ENCODE measurements at regions of chr11 and their contacts with region 1.

Region 1: DNA sequence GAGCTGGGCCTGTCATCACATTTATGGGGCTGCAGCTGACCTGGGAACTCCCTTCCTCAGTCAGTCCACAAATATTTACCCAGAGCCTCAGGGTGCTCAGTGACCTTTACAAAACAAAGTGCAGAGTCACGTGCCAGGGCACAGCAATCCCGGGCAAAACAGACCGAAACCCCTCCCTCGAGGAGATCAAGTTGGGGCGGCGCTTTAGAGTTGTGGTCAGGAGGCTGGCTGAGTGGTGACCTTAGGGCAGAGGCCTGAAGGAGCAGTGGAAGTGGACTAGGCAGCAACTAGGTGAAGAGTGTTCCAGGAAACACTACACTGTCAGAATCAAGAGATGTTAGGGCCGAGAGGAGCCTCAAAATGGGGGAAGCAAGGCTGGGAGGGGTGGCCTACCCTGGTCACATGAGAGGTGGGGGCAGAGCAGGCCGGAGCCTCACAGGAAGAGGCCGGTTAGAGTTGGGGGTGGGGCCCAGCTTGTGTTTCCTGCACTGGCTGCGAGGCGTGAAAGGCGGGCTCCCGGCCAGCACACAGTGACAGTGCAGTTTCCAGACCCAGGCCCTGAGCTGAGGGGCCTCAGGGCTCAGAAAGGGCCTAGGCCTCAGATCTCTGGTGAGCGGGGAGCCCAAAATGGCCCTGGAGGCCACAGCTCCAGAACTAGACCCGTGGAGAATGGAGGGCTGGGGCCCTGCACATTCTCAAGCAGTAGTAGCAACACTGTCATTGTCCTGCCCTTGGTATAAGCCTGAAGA is 3.7 kb upstream of the NEAT1 start:
- DNase-seq: peak; percentile 97
- H3K4me3 Mint-ChIP-seq: peak overlapping the region; percentile 100
- H3K27ac Mint-ChIP-seq: peak overlapping the region; percentile 99
- H3K4me1 Mint-ChIP-seq: peaks cover 40% of the 10 kb centered on the region
- H3K27me3 Mint-ChIP-seq: peaks cover 10% of the 10 kb centered on the region

Region 2: GRCh38 chr11:64854534-64855429 is 564.1 kb before region 1 on chr11:
- CTCF ChIA-PET with region 1: no interaction called
- intact Hi-C with region 1: loop called (anchors 5 kb)
- DNase-seq: peak; percentile 67
- H3K4me3 Mint-ChIP-seq: no peak overlapping the region
- H3K27ac Mint-ChIP-seq: peak overlapping the region; percentile 89
- H3K4me1 Mint-ChIP-seq: peaks cover 94% of the 10 kb centered on the region
- H3K27me3 Mint-ChIP-seq: no peaks in the 10 kb centered on the region

Region 3: DNA sequence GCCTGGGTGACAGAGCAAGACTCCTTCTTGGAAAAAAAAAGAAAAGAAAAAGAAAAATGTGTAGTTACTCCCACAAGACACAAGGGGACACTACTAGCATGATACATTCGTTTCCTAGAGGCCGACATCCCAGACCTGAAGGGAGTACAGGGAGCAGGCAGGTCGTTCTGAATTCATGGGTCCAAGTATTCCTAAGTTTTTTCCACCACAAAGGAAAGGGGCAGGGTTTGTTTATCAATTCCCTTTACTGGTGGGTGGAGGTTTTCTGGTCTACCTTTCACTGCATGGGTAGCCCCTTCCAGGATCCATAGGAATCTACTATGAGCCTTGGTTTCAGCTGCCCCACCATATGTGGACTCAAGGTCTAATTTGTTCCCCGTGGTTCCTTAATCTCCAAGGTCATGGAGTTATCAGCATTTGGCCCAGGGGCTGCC is 52.5 kb before region 1 on chr11:
- CTCF ChIA-PET with region 1: interaction called, 4 read pairs
- intact Hi-C with region 1: loop called (anchors 2 kb)
- DNase-seq: peak; percentile 46
- H3K4me3 Mint-ChIP-seq: no peak overlapping the region
- H3K27ac Mint-ChIP-seq: no peak overlapping the region
- H3K4me1 Mint-ChIP-seq: peaks cover 4% of the 10 kb centered on the region
- H3K27me3 Mint-ChIP-seq: no peaks in the 10 kb centered on the region

Region 4: GRCh38 chr11:65404638-65405339 is 14.1 kb before region 1 on chr11:
- CTCF ChIA-PET with region 1: interaction called, 15 read pairs
- intact Hi-C with region 1: no loop called
- DNase-seq: no peak
- H3K4me3 Mint-ChIP-seq: no peak overlapping the region
- H3K27ac Mint-ChIP-seq: no peak overlapping the region
- H3K4me1 Mint-ChIP-seq: peaks cover 4% of the 10 kb centered on the region
- H3K27me3 Mint-ChIP-seq: no peaks in the 10 kb centered on the region

Region 5: GRCh38 chr11:65436412-65437032 is 17.6 kb after region 1 on chr11:
- CTCF ChIA-PET with region 1: interaction called, 10 read pairs
- intact Hi-C with region 1: loop called (anchors 2 kb)
- DNase-seq: peak; percentile 39
- H3K4me3 Mint-ChIP-seq: no peak overlapping the region
- H3K27ac Mint-ChIP-seq: peak overlapping the region; percentile 60
- H3K4me1 Mint-ChIP-seq: peaks cover 83% of the 10 kb centered on the region
- H3K27me3 Mint-ChIP-seq: no peaks in the 10 kb centered on the region

Region 6: GRCh38 chr11:65497141-65498041 is 78.5 kb after region 1 on chr11:
- CTCF ChIA-PET with region 1: interaction called, 359 read pairs
- intact Hi-C with region 1: loop called (anchors 1 kb)
- DNase-seq: peak; percentile 99
- H3K4me3 Mint-ChIP-seq: no peak overlapping the region
- H3K27ac Mint-ChIP-seq: no peak overlapping the region
- H3K4me1 Mint-ChIP-seq: peaks cover 37% of the 10 kb centered on the region
- H3K27me3 Mint-ChIP-seq: no peaks in the 10 kb centered on the region

Region 7: GRCh38 chr11:65615229-65615941 is 196.5 kb after region 1 on chr11 and contains the start of gene PCNX3:
- CTCF ChIA-PET with region 1: interaction called, 3 read pairs
- intact Hi-C with region 1: loop called (anchors 1 kb)
- DNase-seq: peak; percentile 100
- H3K4me3 Mint-ChIP-seq: peak within 1 kb of the TSS; percentile 95
- H3K27ac Mint-ChIP-seq: peak within 1 kb of the TSS; percentile 98
- H3K4me1 Mint-ChIP-seq: peaks cover 54% of the 10 kb centered on the region
- H3K27me3 Mint-ChIP-seq: no peaks in the 10 kb centered on the region
- total RNA-seq, gene PCNX3: 21.6 to 24.7 TPM

Measured in activated naive CD4-positive, alpha-beta T cell treated with anti-CD3 and anti-CD28 coated beads for 36 hours (primary cell).